ENCODE measurements at regions of chr10 and their contacts with region 1.

Region 1: DNA sequence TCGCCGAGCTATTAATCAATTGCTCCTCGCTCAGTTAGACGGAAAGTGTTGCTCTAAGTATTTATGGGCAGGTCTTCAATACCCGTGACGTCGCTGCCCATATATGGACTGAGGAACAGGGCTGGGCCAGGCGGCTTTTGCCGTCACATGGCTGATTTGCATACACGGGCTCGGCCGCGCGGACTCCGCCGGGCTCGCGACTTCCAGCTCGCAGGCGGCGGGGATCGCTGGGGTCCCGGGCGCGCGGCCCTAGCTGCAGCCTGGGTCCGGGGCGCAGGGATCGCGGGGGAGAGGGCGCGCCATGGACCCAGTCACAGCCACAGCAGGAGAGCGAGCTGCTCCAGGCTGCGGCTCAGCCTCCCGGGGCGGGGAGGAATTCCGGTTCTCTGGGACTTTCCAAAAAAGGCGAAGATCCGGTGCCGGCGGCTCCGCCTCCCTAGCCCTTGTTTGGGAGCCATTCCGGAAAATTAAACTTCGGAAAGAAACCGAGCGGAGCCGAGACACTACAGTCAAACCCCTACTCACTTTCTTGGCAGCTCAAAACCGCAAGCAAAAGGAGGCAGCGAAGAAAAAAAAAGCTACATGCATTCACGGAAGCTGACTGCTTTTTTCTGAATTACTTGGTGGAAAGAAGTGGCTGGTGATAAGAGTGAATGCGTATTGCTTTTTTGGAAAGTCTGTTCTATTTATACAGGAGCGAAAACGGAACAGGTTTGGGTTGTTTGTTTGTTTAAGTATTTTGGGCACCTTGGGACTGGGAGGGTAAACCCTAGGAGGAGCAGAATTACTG is at the start of gene EGR2:
- DNase-seq: peak; percentile 97
- ATAC-seq: peak; percentile 85
- H3K4me3 ChIP-seq: peak within 1 kb of the TSS; percentile 88
- H3K27ac ChIP-seq: peak within 1 kb of the TSS; percentile 86
- H3K4me1 ChIP-seq: peaks cover 28% of the 10 kb centered on the region
- H3K27me3 ChIP-seq: peaks cover 29% of the 10 kb centered on the region
- CTCF ChIP-seq: no peak
- total RNA-seq, gene EGR2: 41.4 TPM

Region 2: GRCh38 chr10:62443866-62444265 is 372.7 kb before region 1 on chr10:
- intact Hi-C with region 1: loop called (anchors 10 kb)
- DNase-seq: no peak
- ATAC-seq: no peak
- H3K4me3 ChIP-seq: no peak overlapping the region
- H3K27ac ChIP-seq: no peak overlapping the region
- H3K4me1 ChIP-seq: no peaks in the 10 kb centered on the region
- H3K27me3 ChIP-seq: no peaks in the 10 kb centered on the region
- CTCF ChIP-seq: no peak

Region 3: DNA sequence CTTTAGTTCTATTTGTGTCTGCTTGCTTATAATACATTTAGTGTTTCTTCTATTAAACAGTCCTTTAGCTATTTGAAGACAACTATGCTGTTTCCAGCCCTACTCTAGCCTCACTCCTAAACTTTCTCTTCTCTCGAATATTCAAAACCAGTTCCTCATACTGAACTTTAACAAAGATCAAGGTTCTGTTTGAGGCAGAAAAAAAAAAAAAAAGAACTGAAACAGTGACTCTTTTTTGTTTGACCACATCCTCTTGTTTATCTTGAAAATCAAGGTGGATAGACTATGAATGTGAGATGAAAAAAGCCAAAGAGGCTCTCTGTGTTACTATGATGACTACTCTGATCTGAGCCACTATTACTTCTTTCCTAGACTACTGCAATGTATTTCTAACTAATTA is 288.1 kb before region 1 on chr10:
- intact Hi-C with region 1: no loop called
- DNase-seq: no peak
- ATAC-seq: no peak
- H3K4me3 ChIP-seq: no peak overlapping the region
- H3K27ac ChIP-seq: no peak overlapping the region
- H3K4me1 ChIP-seq: no peaks in the 10 kb centered on the region
- H3K27me3 ChIP-seq: no peaks in the 10 kb centered on the region
- CTCF ChIP-seq: no peak

Region 4: GRCh38 chr10:63227207-63227915 is 410.8 kb after region 1 on chr10:
- intact Hi-C with region 1: no loop called
- DNase-seq: no peak
- ATAC-seq: no peak
- H3K4me3 ChIP-seq: no peak overlapping the region
- H3K27ac ChIP-seq: no peak overlapping the region
- H3K4me1 ChIP-seq: peaks cover 16% of the 10 kb centered on the region
- H3K27me3 ChIP-seq: no peaks in the 10 kb centered on the region
- CTCF ChIP-seq: no peak

Region 5: GRCh38 chr10:64118736-64119135 is 1302.2 kb after region 1 on chr10:
- intact Hi-C with region 1: no loop called
- DNase-seq: no peak
- ATAC-seq: no peak
- H3K4me3 ChIP-seq: no peak overlapping the region
- H3K27ac ChIP-seq: no peak overlapping the region
- H3K4me1 ChIP-seq: no peaks in the 10 kb centered on the region
- H3K27me3 ChIP-seq: no peaks in the 10 kb centered on the region
- CTCF ChIP-seq: no peak